Vagina (tissue), 2 donors: ENCODE measurements at regions of chr18 and their contacts with region 1.

Region 1: GRCh38 chr18:23623040-23623439 is 36.7 kb upstream of the NPC1 start:
- DNase-seq: no peak
- H3K4me3 ChIP-seq: no peak overlapping the region
- H3K27ac ChIP-seq: no peak overlapping the region
- H3K4me1 ChIP-seq: peaks cover 26% of the 10 kb centered on the region
- H3K27me3 ChIP-seq: no peaks in the 10 kb centered on the region
- CTCF ChIP-seq: no peak
- POLR2A ChIP-seq: no peak

Region 2: DNA sequence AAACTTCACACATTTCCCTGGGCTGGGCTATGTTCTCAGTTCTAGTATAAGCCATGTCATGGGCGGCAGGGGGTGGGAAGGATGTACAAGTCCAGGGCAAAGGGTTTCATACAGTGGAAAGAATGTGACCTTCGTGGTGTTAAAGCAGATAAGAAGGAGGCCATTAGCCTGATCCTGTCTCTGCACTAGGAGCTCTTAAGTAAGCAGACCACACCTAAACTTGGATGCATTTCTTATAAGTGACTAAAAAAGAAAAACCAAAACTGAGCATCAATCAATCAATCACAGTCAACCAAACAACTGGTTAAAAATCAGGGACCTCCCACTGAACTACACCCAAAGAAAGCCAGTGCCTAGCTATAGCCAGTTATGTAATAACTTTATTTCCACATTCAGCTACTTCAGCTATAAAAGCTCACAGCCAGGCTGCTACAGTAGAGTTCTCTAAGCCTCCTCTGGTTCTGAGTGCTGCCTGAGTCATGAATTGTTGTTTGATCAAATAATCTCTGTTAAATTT is 216.7 kb before region 1 on chr18:
- intact Hi-C with region 1: no loop called
- DNase-seq: no peak
- H3K4me3 ChIP-seq: no peak overlapping the region
- H3K27ac ChIP-seq: no peak overlapping the region
- H3K4me1 ChIP-seq: peaks cover 7% of the 10 kb centered on the region
- H3K27me3 ChIP-seq: no peaks in the 10 kb centered on the region
- CTCF ChIP-seq: no peak
- POLR2A ChIP-seq: no peak

Region 3: DNA sequence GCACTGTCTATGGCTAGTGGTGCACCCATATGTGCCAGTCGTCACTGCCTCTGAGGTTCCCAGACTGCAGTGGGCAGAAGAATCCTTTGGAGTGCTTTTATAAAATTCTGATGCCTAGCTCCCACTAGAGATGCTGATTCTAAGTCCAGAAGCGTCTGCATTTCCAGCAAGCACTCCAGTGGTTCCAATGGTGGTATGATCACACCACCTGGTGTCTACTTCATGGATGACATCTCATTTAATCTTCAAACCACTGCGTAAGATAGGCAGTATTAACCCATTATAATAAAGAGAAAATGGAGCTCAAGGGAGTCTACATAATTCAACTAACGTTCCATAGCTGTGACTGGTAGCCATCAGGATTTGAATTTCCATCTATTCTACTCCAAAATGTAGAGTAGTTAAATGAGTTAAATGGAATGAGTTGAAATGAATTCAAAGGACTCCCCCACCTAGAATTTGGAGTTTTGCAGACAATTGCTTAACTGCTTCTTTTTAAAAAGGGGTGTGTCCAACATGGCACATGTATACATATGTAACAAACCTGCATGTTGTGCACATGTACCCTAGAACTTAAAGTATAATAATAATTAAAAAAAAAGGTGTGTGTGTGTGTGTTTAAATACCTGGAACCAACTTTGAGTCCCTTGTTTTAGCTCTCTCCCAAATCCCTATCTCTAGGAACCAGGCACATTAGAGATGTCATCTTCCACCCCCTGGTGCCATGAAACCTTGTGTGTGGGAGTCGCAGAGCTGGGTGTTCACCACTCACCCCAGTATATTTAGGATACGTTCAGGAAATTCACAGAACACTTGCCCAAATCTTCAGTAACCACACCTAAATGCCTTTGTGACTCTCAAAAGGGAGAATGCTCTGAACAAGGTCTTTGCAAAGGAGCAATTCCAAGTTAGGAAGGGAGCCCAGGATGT is 80.3 kb after region 1 on chr18:
- intact Hi-C with region 1: loop called (anchors 5 kb)
- DNase-seq: no peak
- H3K4me3 ChIP-seq: no peak overlapping the region
- H3K27ac ChIP-seq: peak overlapping the region; percentile 34
- H3K4me1 ChIP-seq: no peaks in the 10 kb centered on the region
- H3K27me3 ChIP-seq: no peaks in the 10 kb centered on the region
- CTCF ChIP-seq: peak; percentile 56 to 77 (median 58)
- POLR2A ChIP-seq: no peak